Activated CD4-positive, alpha-beta T cell treated with anti-CD3 and anti-CD28 coated beads for 36 hours (primary cell): ENCODE measurements at regions of chr6 and their contacts with region 1.

Region 1: GRCh38 chr6:129490521-129491245 is 219.3 kb downstream of the ARHGAP18 start:
- DNase-seq: peak; percentile 71
- ATAC-seq: peak; percentile 84
- H3K4me3 Mint-ChIP-seq: peak overlapping the region; percentile 70
- H3K27ac Mint-ChIP-seq: peak overlapping the region; percentile 97
- H3K4me1 Mint-ChIP-seq: peaks cover 70% of the 10 kb centered on the region
- H3K27me3 Mint-ChIP-seq: no peaks in the 10 kb centered on the region

Region 2: GRCh38 chr6:128655978-128656498 is 834.6 kb before region 1 on chr6:
- CTCF ChIA-PET with region 1: interaction called, 3 read pairs
- POLR2A ChIA-PET with region 1: no interaction called
- intact Hi-C with region 1: loop called in 1 of 2 experiments (anchors 5 kb)
- DNase-seq: peak; percentile 27
- ATAC-seq: peak; percentile 96
- H3K4me3 Mint-ChIP-seq: peak overlapping the region; percentile 12
- H3K27ac Mint-ChIP-seq: peak overlapping the region; percentile 89
- H3K4me1 Mint-ChIP-seq: peaks cover 38% of the 10 kb centered on the region
- H3K27me3 Mint-ChIP-seq: peaks cover 10% of the 10 kb centered on the region

Region 3: GRCh38 chr6:129448965-129449364 is 41.7 kb before region 1 on chr6:
- CTCF ChIA-PET with region 1: interaction called, 3 read pairs
- POLR2A ChIA-PET with region 1: no interaction called
- intact Hi-C with region 1: loop called (anchors 1 kb)
- DNase-seq: no peak
- ATAC-seq: peak; percentile 92
- H3K4me3 Mint-ChIP-seq: no peak overlapping the region
- H3K27ac Mint-ChIP-seq: no peak overlapping the region
- H3K4me1 Mint-ChIP-seq: peaks cover 76% of the 10 kb centered on the region
- H3K27me3 Mint-ChIP-seq: no peaks in the 10 kb centered on the region

Region 4: DNA sequence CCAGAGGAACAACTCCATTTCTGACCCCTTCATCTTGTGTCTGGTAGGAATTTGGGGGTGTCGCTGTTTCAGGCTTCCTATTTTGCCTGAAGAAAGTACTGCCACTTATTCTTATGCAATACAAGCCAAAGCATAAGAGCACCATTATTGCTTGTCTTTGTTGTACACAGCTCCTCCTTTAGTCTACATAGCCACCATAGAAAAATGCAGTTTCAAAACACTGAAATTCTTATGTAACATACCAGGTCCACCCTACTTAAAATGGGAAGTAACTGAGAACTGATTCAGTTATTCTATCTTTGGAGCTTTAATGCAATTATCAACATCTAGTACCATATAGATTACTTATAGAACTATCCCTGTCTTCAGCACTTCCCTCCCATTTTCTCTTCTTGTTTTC is 36.2 kb before region 1 on chr6:
- CTCF ChIA-PET with region 1: interaction called, 3 read pairs
- POLR2A ChIA-PET with region 1: no interaction called
- intact Hi-C with region 1: loop called (anchors 1 kb)
- DNase-seq: no peak
- ATAC-seq: no peak
- H3K4me3 Mint-ChIP-seq: no peak overlapping the region
- H3K27ac Mint-ChIP-seq: no peak overlapping the region
- H3K4me1 Mint-ChIP-seq: peaks cover 43% of the 10 kb centered on the region
- H3K27me3 Mint-ChIP-seq: no peaks in the 10 kb centered on the region

Region 5: GRCh38 chr6:129555206-129555832 is 64.6 kb after region 1 on chr6:
- CTCF ChIA-PET with region 1: no interaction called
- POLR2A ChIA-PET with region 1: no interaction called
- intact Hi-C with region 1: no loop called
- DNase-seq: no peak
- ATAC-seq: no peak
- H3K4me3 Mint-ChIP-seq: no peak overlapping the region
- H3K27ac Mint-ChIP-seq: no peak overlapping the region
- H3K4me1 Mint-ChIP-seq: no peaks in the 10 kb centered on the region
- H3K27me3 Mint-ChIP-seq: no peaks in the 10 kb centered on the region

Region 6: GRCh38 chr6:130027948-130028347 is 537.3 kb after region 1 on chr6:
- CTCF ChIA-PET with region 1: no interaction called
- POLR2A ChIA-PET with region 1: no interaction called
- intact Hi-C with region 1: loop called in 1 of 2 experiments (anchors 5 kb)
- DNase-seq: no peak
- ATAC-seq: peak; percentile 67
- H3K4me3 Mint-ChIP-seq: no peak overlapping the region
- H3K27ac Mint-ChIP-seq: peak overlapping the region; percentile 66
- H3K4me1 Mint-ChIP-seq: peaks cover 62% of the 10 kb centered on the region
- H3K27me3 Mint-ChIP-seq: no peaks in the 10 kb centered on the region